ENCODE measurements at regions of chr15 and their contacts with region 1.

Region 1: DNA sequence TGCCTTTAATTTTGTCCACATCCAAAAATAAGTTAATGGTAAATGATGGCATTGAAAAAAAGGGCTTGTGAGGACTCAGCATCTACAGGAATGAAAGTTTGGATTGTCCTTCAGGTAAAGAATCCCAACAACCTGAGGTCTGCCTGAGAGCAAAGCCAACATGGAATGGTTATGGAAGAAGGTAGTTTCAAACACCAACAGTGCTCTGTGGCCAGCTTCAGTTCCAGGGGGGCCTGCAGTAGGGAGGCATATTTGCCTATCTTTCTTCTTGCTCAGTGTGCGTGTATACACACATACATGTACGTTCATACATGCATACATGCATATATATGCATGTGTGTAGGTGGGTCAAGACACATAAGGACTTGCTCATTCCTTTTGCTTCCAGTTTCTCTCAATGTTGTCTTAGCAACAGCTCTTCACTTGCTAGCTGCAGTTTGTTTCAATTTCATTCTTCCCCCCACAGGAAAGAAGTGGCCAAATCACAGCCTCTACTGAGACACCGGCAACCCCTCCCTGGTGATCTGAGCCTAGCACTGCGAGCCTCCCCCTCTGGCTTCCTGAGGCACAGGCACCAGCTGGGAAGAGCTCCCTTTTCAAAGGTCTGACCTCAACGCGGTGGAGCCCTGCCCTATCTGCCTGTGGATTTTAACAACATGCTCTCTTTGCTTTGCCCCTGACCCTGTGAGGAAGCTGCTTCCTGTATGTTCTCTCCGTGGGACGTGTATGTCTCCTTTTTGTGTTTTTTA is 146.2 kb downstream of the KLF13 start:
- DNase-seq: peak; percentile 81
- H3K4me3 Mint-ChIP-seq: peak overlapping the region; percentile 64
- H3K27ac Mint-ChIP-seq: peak overlapping the region; percentile 94
- H3K4me1 Mint-ChIP-seq: peaks cover 44% of the 10 kb centered on the region
- H3K27me3 Mint-ChIP-seq: no peaks in the 10 kb centered on the region

Region 2: GRCh38 chr15:31265871-31266711 is 206.7 kb before region 1 on chr15:
- CTCF ChIA-PET with region 1: no interaction called
- intact Hi-C with region 1: loop called (anchors 5 kb)
- DNase-seq: peak; percentile 81
- H3K4me3 Mint-ChIP-seq: no peak overlapping the region
- H3K27ac Mint-ChIP-seq: peak overlapping the region; percentile 67
- H3K4me1 Mint-ChIP-seq: peaks cover 84% of the 10 kb centered on the region
- H3K27me3 Mint-ChIP-seq: no peaks in the 10 kb centered on the region

Region 3: DNA sequence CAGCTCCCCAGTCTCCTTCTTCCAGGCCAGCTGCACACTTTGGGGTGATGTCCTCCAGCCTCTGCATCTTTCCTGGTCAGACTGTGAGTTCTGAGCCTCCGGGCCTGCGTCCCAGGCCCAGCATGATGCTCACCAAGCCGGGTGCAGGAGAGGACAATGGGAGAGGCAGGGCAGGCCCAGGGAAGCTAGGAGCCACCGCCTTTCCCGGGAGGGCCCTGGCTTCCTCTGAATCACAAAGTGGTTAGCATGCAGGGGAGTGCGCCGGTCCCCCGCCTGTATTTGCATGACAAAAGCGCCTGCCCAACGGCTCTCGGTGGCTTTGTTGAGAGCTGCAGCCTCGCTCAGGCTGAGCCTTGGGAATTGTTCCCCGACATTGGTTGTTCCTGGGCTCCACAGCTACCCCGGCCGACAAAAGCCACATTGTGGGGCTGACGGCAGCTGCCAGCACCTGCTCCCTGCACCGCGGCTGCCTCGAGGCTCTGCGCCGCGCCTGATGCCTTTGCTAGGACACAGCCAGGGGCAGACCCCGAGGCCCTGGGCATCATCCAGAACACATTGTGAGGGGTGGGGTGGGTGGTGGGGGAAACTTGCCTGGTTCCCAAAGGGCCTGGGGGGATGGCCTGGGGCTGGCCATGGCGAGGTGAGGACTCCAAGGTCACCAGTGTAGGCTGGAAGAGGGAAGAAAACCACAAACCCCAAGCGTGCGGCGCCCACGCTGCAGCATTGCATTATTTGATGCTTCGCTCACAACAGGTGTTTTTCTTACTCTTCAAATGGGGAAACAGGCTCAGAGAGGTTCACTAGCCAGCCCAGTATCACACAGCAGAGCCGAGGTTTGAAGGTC is 166.2 kb before region 1 on chr15:
- CTCF ChIA-PET with region 1: no interaction called
- intact Hi-C with region 1: no loop called
- DNase-seq: no peak
- H3K4me3 Mint-ChIP-seq: no peak overlapping the region
- H3K27ac Mint-ChIP-seq: no peak overlapping the region
- H3K4me1 Mint-ChIP-seq: peaks cover 35% of the 10 kb centered on the region
- H3K27me3 Mint-ChIP-seq: no peaks in the 10 kb centered on the region

Region 4: GRCh38 chr15:31344823-31345605 is 127.8 kb before region 1 on chr15:
- CTCF ChIA-PET with region 1: interaction called, 3 read pairs
- intact Hi-C with region 1: loop called (anchors 2 kb)
- DNase-seq: peak; percentile 66
- H3K4me3 Mint-ChIP-seq: peak overlapping the region; percentile 92
- H3K27ac Mint-ChIP-seq: peak overlapping the region; percentile 99
- H3K4me1 Mint-ChIP-seq: peaks cover 98% of the 10 kb centered on the region
- H3K27me3 Mint-ChIP-seq: no peaks in the 10 kb centered on the region

Region 5: GRCh38 chr15:31440754-31441311 is 32.0 kb before region 1 on chr15:
- CTCF ChIA-PET with region 1: interaction called, 46 read pairs
- intact Hi-C with region 1: no loop called
- DNase-seq: peak; percentile 40
- H3K4me3 Mint-ChIP-seq: peak overlapping the region; percentile 64
- H3K27ac Mint-ChIP-seq: no peak overlapping the region
- H3K4me1 Mint-ChIP-seq: peaks cover 50% of the 10 kb centered on the region
- H3K27me3 Mint-ChIP-seq: no peaks in the 10 kb centered on the region

Region 6: DNA sequence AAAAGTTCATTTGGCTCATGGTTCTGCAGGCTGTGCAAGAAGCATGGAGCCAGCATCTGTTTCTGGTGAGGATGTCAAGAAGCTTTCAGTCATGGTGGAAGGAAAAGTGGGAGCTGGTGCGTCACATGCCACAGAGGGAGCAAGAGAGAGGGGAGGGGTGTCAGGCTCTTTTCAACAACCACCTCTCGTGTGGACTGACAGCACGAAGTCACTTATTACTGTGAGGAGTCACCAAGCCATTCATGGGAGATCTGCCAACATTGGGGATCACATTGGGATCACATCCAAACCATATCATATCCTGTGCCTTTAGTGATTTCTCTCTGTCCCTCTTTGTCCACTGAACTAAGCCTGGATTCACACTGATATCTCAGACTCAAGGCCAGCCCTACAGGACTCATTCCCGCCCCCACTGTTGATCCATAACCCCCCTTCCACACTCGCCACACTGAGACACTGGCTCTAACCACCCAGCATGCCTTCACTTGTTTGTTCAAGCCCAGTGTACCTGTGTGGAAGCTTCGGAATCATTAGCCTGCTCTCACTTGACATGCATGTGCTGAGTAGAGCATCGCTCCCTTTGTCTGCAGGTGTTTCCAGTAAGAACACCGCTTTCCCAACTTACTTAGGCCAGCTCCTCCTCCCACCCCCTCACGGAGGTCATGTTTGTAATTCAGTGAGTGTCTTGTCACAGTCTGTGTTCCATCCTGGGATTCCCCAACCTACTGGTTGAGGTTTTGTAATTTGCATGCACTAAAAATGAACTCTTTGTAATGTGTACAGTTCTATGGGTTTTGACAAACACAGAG is 14.0 kb before region 1 on chr15:
- CTCF ChIA-PET with region 1: interaction called, 13 read pairs
- intact Hi-C with region 1: loop called (anchors 1 kb)
- DNase-seq: peak; percentile 86
- H3K4me3 Mint-ChIP-seq: peak overlapping the region; percentile 57
- H3K27ac Mint-ChIP-seq: peak overlapping the region; percentile 87
- H3K4me1 Mint-ChIP-seq: peaks cover 37% of the 10 kb centered on the region
- H3K27me3 Mint-ChIP-seq: no peaks in the 10 kb centered on the region

Region 7: GRCh38 chr15:31483053-31483985 is 10.5 kb after region 1 on chr15:
- CTCF ChIA-PET with region 1: interaction called, 50 read pairs
- intact Hi-C with region 1: loop called (anchors 1 kb)
- DNase-seq: peak; percentile 63
- H3K4me3 Mint-ChIP-seq: peak overlapping the region; percentile 92
- H3K27ac Mint-ChIP-seq: peak overlapping the region; percentile 91
- H3K4me1 Mint-ChIP-seq: peaks cover 33% of the 10 kb centered on the region
- H3K27me3 Mint-ChIP-seq: no peaks in the 10 kb centered on the region

Measured in activated naive CD4-positive, alpha-beta T cell treated with anti-CD3 and anti-CD28 coated beads for 36 hours (primary cell).